GM12878 (cell line): ENCODE measurements at regions of chr3 and their contacts with region 1.

Region 1: GRCh38 chr3:197501879-197502620 is 53.7 kb downstream of the BDH1 start:
- DNase-seq: peak; percentile 57
- ATAC-seq: peak; percentile 97
- H3K4me3 ChIP-seq: no peak overlapping the region
- H3K27ac ChIP-seq: peak overlapping the region; percentile 63
- H3K4me1 ChIP-seq: peaks cover 19% of the 10 kb centered on the region
- H3K27me3 ChIP-seq: no peaks in the 10 kb centered on the region
- CTCF ChIP-seq: peak; percentile 67 to 81 (median 78)
- EP300 ChIP-seq: no peak
- POLR2A ChIP-seq: no peak
- RAD21 ChIP-seq: peak; percentile 93

Region 2: GRCh38 chr3:196979545-196979944 is 522.5 kb before region 1 on chr3:
- CTCF ChIA-PET with region 1: no interaction called
- POLR2A ChIA-PET with region 1: no interaction called
- RAD21 ChIA-PET with region 1: no interaction called
- SMC1A ChIA-PET with region 1: no interaction called
- in situ Hi-C with region 1: loop called (anchors 25 kb)
- intact Hi-C with region 1: loop called (anchors 5 kb)
- DNase-seq: no peak
- ATAC-seq: no peak
- H3K4me3 ChIP-seq: no peak overlapping the region
- H3K27ac ChIP-seq: no peak overlapping the region
- H3K4me1 ChIP-seq: peaks cover 6% of the 10 kb centered on the region
- H3K27me3 ChIP-seq: no peaks in the 10 kb centered on the region
- CTCF ChIP-seq: no peak
- EP300 ChIP-seq: no peak
- POLR2A ChIP-seq: no peak
- RAD21 ChIP-seq: no peak

Region 3: GRCh38 chr3:197224034-197224444 is 278.0 kb before region 1 on chr3:
- CTCF ChIA-PET with region 1: interaction called, 83 read pairs
- POLR2A ChIA-PET with region 1: interaction called, 5 read pairs
- RAD21 ChIA-PET with region 1: interaction called, 49 read pairs
- SMC1A ChIA-PET with region 1: interaction called, 39 read pairs
- in situ Hi-C with region 1: no loop called
- intact Hi-C with region 1: loop called (anchors 2 kb)
- DNase-seq: peak; percentile 19
- ATAC-seq: peak; percentile 84
- H3K4me3 ChIP-seq: no peak overlapping the region
- H3K27ac ChIP-seq: no peak overlapping the region
- H3K4me1 ChIP-seq: peaks cover 3% of the 10 kb centered on the region; the same call in 1 of the 2 replicates
- H3K27me3 ChIP-seq: no peaks in the 10 kb centered on the region
- CTCF ChIP-seq: peak; percentile 40 to 66 (median 47); a peak in 5 of 6 replicates
- EP300 ChIP-seq: no peak
- POLR2A ChIP-seq: no peak
- RAD21 ChIP-seq: peak; percentile 86

Region 4: DNA sequence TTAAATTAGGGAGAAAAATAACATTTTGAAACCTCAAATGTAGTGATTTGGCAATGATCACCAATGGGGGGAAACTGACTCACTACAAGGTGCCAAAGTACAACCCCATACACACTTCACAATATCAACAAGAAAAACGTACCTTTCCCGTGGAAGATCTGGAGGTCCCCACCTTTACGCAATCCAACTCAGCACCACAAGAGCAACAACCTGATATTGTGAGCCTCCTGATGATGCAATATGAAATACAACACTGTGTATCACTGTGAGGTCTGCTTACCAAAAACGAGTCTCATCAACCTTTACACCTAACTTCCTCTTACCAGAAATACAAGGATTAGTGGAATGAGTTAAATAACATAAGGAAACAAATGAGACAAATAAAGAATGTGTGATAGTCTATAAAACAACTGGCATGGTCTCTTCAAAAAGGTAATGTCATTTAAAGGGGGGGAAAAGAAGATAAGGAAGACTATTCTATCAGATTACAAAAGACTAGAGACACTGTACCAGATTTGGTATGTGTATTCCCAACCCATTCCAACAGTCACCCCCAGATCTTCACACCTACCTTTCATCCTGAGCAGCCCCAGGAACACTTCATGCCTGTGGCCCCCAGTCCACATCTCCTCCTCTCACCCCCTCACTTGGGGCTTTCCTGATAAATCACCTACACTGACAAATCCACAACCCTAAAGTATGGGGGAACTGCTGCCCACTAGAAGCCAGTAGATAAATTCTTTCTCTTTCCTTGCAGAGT is 231.3 kb before region 1 on chr3:
- CTCF ChIA-PET with region 1: interaction called, 10 read pairs
- POLR2A ChIA-PET with region 1: no interaction called
- RAD21 ChIA-PET with region 1: interaction called, 3 read pairs
- SMC1A ChIA-PET with region 1: interaction called, 7 read pairs
- in situ Hi-C with region 1: no loop called
- intact Hi-C with region 1: no loop called
- DNase-seq: no peak
- ATAC-seq: no peak
- H3K4me3 ChIP-seq: no peak overlapping the region
- H3K27ac ChIP-seq: no peak overlapping the region
- H3K4me1 ChIP-seq: no peaks in the 10 kb centered on the region
- H3K27me3 ChIP-seq: no peaks in the 10 kb centered on the region
- CTCF ChIP-seq: no peak
- EP300 ChIP-seq: no peak
- POLR2A ChIP-seq: no peak
- RAD21 ChIP-seq: no peak

Region 5: DNA sequence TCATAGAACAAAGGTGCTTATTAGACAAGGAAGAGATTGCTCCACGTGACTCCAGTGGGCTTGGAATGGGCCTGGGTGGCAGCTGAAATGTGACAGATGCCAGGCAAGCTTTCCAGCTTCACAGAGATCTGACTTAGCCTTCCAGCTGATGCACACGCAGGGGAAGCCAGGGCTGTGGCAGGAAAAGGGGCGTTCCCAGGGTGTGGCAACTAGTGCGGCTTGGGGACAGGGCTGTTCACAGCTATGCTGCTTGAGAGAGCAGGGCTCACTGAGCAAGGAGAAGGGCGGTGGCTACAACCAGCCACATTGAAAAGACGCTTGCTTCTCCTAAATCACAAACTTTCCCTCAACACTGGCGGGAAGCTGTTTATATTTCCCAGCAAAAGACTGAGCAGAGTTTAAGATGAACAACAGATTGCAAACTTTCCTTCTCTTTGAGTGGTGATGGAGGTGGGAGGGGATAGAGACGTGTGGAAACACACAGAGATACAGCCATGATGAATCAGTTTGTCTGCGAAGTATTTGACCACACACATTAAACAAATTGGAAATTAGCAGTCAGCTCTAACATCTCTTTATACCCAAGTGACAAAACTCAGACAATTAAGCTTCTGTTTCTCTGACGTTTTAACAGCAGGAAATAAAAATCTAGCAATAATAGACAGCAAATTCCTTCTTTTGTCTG is 73.8 kb before region 1 on chr3:
- CTCF ChIA-PET with region 1: no interaction called
- POLR2A ChIA-PET with region 1: no interaction called
- RAD21 ChIA-PET with region 1: no interaction called
- SMC1A ChIA-PET with region 1: no interaction called
- in situ Hi-C with region 1: no loop called
- intact Hi-C with region 1: no loop called
- DNase-seq: no peak
- ATAC-seq: peak; percentile 89
- H3K4me3 ChIP-seq: no peak overlapping the region
- H3K27ac ChIP-seq: no peak overlapping the region
- H3K4me1 ChIP-seq: no peaks in the 10 kb centered on the region
- H3K27me3 ChIP-seq: no peaks in the 10 kb centered on the region
- CTCF ChIP-seq: no peak
- EP300 ChIP-seq: no peak
- POLR2A ChIP-seq: no peak
- RAD21 ChIP-seq: no peak

Region 6: DNA sequence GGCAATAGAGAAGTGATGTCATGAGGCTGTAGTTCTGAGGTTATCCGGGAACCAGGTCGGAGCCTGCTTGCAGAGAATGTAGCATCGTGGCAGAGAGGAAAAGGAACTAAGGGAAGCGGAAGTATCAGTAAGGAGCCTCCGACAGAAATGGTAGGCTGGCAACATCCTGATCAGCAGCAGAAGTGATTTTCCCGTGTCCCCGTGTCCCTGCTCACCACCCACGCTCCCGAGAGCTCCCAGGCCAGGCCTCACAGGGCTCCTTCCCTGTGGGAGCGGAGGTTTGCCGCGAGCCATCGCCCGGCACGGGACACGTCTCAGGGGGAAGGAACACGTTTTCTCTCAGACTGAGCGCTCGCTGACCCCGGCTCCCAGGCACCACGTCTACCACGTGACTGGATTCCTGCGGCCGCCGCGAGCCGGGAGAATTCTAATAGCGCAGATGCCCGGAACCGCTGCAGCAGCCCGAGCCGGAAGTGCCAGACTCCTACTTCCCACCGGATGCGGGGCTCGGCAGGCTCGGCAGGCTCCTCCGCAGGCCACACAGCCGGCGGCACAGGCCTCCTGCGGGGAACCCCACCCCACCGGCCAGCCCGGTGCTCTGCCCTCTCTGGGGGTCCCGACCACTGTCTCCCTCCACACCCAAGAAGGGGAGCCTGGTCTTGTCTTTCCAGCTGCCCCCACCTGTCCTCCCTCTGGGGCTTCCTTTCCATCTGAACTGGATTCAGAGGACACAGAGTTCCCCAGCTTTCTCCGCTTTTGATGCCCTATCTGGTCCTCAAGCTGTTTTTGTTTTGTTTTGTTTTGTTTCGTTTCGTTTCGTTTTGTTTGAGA is 45.6 kb before region 1 on chr3:
- CTCF ChIA-PET with region 1: interaction called, 7 read pairs
- POLR2A ChIA-PET with region 1: no interaction called
- RAD21 ChIA-PET with region 1: interaction called, 5 read pairs
- SMC1A ChIA-PET with region 1: interaction called, 9 read pairs
- in situ Hi-C with region 1: no loop called
- intact Hi-C with region 1: loop called (anchors 2 kb)
- DNase-seq: no peak
- ATAC-seq: peak; percentile 85
- H3K4me3 ChIP-seq: peak overlapping the region; percentile 82
- H3K27ac ChIP-seq: peak overlapping the region; percentile 58
- H3K4me1 ChIP-seq: no peaks in the 10 kb centered on the region
- H3K27me3 ChIP-seq: no peaks in the 10 kb centered on the region
- CTCF ChIP-seq: no peak
- EP300 ChIP-seq: no peak
- POLR2A ChIP-seq: peak; percentile 79
- RAD21 ChIP-seq: no peak